ENCODE measurements at regions of chr2 and their contacts with region 1.

Region 1: GRCh38 chr2:17879101-17879912 is 840 bp downstream of the KCNS3 start:
- DNase-seq: peak; percentile 62 to 83
- H3K4me3 ChIP-seq: peak overlapping the region; percentile 78 to 95 (median 88)
- H3K27ac ChIP-seq: peak overlapping the region; percentile 45; the same call in 1 of the 2 replicates
- H3K4me1 ChIP-seq: peaks cover 2 to 18% (median 7%) of the 10 kb centered on the region in 4 experiments
- H3K27me3 ChIP-seq: peaks cover 9 to 21% (median 19%) of the 10 kb centered on the region in 4 experiments
- CTCF ChIP-seq: peak; percentile 19 to 45 (median 39); a peak in 3 of 4 replicates
- EP300 ChIP-seq: no peak
- POLR2A ChIP-seq: peak in 1 of 2 experiments; percentile 21; a peak in 2 of 3 replicates
- RAD21 ChIP-seq: peak; percentile 21 to 41; a peak in 3 of 4 replicates

Region 2: GRCh38 chr2:17892770-17893534 is 13.6 kb after region 1 on chr2:
- CTCF ChIA-PET with region 1: interaction called, 11 read pairs
- POLR2A ChIA-PET with region 1: interaction called, 31 read pairs
- DNase-seq: no peak
- H3K4me3 ChIP-seq: no peak overlapping the region
- H3K27ac ChIP-seq: no peak overlapping the region
- H3K4me1 ChIP-seq: peaks cover 3 to 9% (median 6%) of the 10 kb centered on the region in 4 experiments; a peak in 5 of 7 replicates
- H3K27me3 ChIP-seq: no peaks in the 10 kb centered on the region
- CTCF ChIP-seq: no peak
- EP300 ChIP-seq: no peak
- POLR2A ChIP-seq: no peak
- RAD21 ChIP-seq: no peak

Region 3: GRCh38 chr2:17912266-17912691 is 33.0 kb after region 1 on chr2:
- CTCF ChIA-PET with region 1: interaction called, 76 read pairs
- POLR2A ChIA-PET with region 1: interaction called, 12 read pairs
- DNase-seq: no peak
- H3K4me3 ChIP-seq: no peak overlapping the region
- H3K27ac ChIP-seq: no peak overlapping the region
- H3K4me1 ChIP-seq: peaks cover 2 to 9% (median 5%) of the 10 kb centered on the region in 4 experiments; a peak in 5 of 7 replicates
- H3K27me3 ChIP-seq: no peaks in the 10 kb centered on the region
- CTCF ChIP-seq: no peak
- EP300 ChIP-seq: no peak
- POLR2A ChIP-seq: no peak
- RAD21 ChIP-seq: no peak

Region 4: DNA sequence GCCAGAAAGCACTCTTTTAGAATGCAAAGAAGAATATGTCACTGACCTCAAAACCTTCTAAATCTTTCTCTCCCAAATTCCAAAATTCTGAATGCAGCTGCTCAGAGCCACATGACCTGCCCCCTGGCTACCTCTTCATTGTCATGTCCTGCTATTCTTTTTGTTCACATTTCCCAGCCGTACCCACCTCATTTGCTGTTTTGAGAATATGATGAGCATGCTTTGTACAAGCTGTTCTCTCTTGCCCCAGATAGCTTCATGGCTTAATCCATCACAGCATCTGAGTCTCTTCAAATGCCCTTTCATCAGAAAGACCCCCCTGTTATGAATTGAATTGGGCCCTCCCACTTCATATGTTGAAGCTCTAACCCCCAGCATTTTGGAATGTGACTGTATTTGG is 213.5 kb after region 1 on chr2:
- CTCF ChIA-PET with region 1: no interaction called
- POLR2A ChIA-PET with region 1: no interaction called
- DNase-seq: no peak
- H3K4me3 ChIP-seq: no peak overlapping the region
- H3K27ac ChIP-seq: no peak overlapping the region
- H3K4me1 ChIP-seq: no peaks in the 10 kb centered on the region
- H3K27me3 ChIP-seq: no peaks in the 10 kb centered on the region
- CTCF ChIP-seq: no peak
- EP300 ChIP-seq: no peak
- POLR2A ChIP-seq: no peak
- RAD21 ChIP-seq: no peak

Measured in H1 (cell line).